ENCODE measurements at regions of chr19 and their contacts with region 1.

Region 1: GRCh38 chr19:31023038-31023437 is 326.2 kb downstream of the TSHZ3 start:
- DNase-seq: no peak
- H3K4me3 ChIP-seq: no peak overlapping the region
- H3K27ac ChIP-seq: no peak overlapping the region
- H3K4me1 ChIP-seq: no peaks in the 10 kb centered on the region
- H3K27me3 ChIP-seq: no peaks in the 10 kb centered on the region
- CTCF ChIP-seq: no peak

Region 2: GRCh38 chr19:31074199-31075135 is 51.4 kb after region 1 on chr19:
- CTCF ChIA-PET with region 1: no interaction called
- dilution Hi-C with region 1: loop called (anchors 5 kb)
- in situ Hi-C with region 1: no loop called
- intact Hi-C with region 1: no loop called
- DNase-seq: no peak
- H3K4me3 ChIP-seq: no peak overlapping the region
- H3K27ac ChIP-seq: no peak overlapping the region
- H3K4me1 ChIP-seq: no peaks in the 10 kb centered on the region
- H3K27me3 ChIP-seq: no peaks in the 10 kb centered on the region
- CTCF ChIP-seq: no peak

Measured in mammary epithelial cell (primary cell).